Activated T-helper 2 cell treated with anti-CD3 and anti-CD28 coated beads, Interferon-gamma antibody, Interleukin-2, Interleukin-4, amounts not matched to agents 10 μg/mL and 5 μg/mL and 100 μg/mL, durations not matched to agents 14 hours and 24 hours and 36 hours (primary cell): ENCODE measurements at regions of chr2 and their contacts with region 1.

Region 1: GRCh38 chr2:172128484-172128883 is 25.8 kb upstream of the DLX2 start:
- DNase-seq: no peak
- H3K4me3 Mint-ChIP-seq: no peak overlapping the region
- H3K27ac Mint-ChIP-seq: no peak overlapping the region
- H3K4me1 Mint-ChIP-seq: peaks cover 1% of the 10 kb centered on the region
- H3K27me3 Mint-ChIP-seq: peaks cover 14% of the 10 kb centered on the region

Region 2: GRCh38 chr2:171598713-171599319 is 529.7 kb before region 1 on chr2:
- intact Hi-C with region 1: loop called (anchors 5 kb)
- DNase-seq: peak; percentile 15
- H3K4me3 Mint-ChIP-seq: no peak overlapping the region
- H3K27ac Mint-ChIP-seq: no peak overlapping the region
- H3K4me1 Mint-ChIP-seq: peaks cover 2% of the 10 kb centered on the region
- H3K27me3 Mint-ChIP-seq: peaks cover 19% of the 10 kb centered on the region